ENCODE measurements at regions of chr3 and their contacts with region 1.

Region 1: GRCh38 chr3:167241048-167241845 is 138.8 kb downstream of the ZBBX start:
- DNase-seq: no peak
- H3K4me3 ChIP-seq: no peak overlapping the region
- H3K27ac ChIP-seq: no peak overlapping the region
- H3K4me1 ChIP-seq: no peaks in the 10 kb centered on the region
- H3K27me3 ChIP-seq: no peaks in the 10 kb centered on the region
- CTCF ChIP-seq: no peak
- POLR2A ChIP-seq: no peak

Region 2: DNA sequence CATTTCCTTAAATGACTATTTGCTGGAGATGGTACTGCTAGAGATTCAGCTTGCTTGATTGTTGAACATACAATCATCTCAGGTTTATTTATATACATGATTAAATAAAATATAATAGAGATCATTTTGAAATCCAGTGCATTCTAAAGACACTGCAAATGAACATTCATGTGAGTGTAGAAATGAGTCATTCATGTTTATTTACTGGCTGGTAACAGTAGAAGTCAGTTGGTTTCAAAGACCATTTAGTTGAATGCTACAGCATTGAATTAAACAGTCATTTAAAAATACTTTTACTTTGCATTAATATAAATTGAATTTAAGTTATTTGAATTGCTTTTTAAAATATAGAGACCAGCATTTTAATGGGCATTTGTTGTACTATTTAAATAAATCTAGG is 1406.3 kb after region 1 on chr3:
- intact Hi-C with region 1: loop called (anchors 10 kb)
- DNase-seq: no peak
- H3K4me3 ChIP-seq: no peak overlapping the region
- H3K27ac ChIP-seq: no peak overlapping the region
- H3K4me1 ChIP-seq: no peaks in the 10 kb centered on the region
- H3K27me3 ChIP-seq: no peaks in the 10 kb centered on the region
- CTCF ChIP-seq: no peak
- POLR2A ChIP-seq: no peak

Measured in breast epithelium (tissue), 4 donors.